Psoas muscle (tissue), 8 donors: ENCODE measurements at regions of chr1 and their contacts with region 1.

Region 1: DNA sequence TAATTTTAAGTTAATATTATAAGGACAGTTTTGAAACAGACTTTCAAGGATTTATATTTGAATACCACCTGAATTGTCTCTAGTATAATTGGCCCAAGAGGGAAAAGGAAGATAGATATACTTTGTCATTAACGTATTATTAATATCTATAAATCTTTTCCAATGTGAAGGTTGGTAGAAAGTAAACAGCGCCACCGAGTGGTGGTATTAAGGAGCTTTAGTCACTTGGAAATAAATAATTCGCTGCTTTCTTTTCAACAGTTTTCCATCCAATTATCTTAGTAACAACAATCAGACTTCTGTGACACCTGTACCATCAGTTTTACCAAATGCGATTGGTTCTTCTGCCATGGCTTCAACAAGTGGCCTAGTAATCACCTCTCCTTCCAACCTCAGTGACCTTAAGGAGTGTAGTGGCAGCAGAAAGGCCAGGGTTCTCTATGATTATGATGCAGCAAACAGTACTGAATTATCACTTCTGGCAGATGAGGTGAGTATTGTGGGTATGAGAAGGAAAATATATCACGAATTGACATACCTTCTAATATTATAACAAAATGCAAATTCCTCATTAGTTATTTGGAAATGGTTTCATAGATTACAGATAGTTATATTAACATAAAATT is 37.7 kb downstream of the SH3GLB1 start:
- DNase-seq: no peak
- ATAC-seq: peak in 2 of 4 donors; percentile 55 to 74
- H3K4me3 ChIP-seq: no peak overlapping the region
- H3K27ac ChIP-seq: no peak overlapping the region
- H3K4me1 ChIP-seq: peaks cover 12% of the 10 kb centered on the region
- H3K27me3 ChIP-seq: no peaks in the 10 kb centered on the region
- CTCF ChIP-seq: peak; percentile 64

Region 2: GRCh38 chr1:86470859-86471258 is 271.2 kb before region 1 on chr1:
- intact Hi-C with region 1: loop called in 1 of 2 experiments (anchors 10 kb)
- DNase-seq: no peak
- ATAC-seq: no peak
- H3K4me3 ChIP-seq: no peak overlapping the region
- H3K27ac ChIP-seq: no peak overlapping the region
- H3K4me1 ChIP-seq: no peaks in the 10 kb centered on the region
- H3K27me3 ChIP-seq: no peaks in the 10 kb centered on the region
- CTCF ChIP-seq: no peak

Region 3: GRCh38 chr1:86704458-86704971 is 37.5 kb before region 1 on chr1 and contains the start of gene SH3GLB1:
- intact Hi-C with region 1: loop called in 1 of 2 experiments (anchors 5 kb)
- DNase-seq: peak; percentile 91 to 95
- ATAC-seq: peak; percentile 86 to 89 (median 88)
- H3K4me3 ChIP-seq: peak within 1 kb of the TSS; percentile 93
- H3K27ac ChIP-seq: peak within 1 kb of the TSS; percentile 99
- H3K4me1 ChIP-seq: peaks cover 27% of the 10 kb centered on the region
- H3K27me3 ChIP-seq: no peaks in the 10 kb centered on the region
- CTCF ChIP-seq: peak; percentile 90
- total RNA-seq, gene SH3GLB1: 158 to 315 (median 198) TPM

Region 4: DNA sequence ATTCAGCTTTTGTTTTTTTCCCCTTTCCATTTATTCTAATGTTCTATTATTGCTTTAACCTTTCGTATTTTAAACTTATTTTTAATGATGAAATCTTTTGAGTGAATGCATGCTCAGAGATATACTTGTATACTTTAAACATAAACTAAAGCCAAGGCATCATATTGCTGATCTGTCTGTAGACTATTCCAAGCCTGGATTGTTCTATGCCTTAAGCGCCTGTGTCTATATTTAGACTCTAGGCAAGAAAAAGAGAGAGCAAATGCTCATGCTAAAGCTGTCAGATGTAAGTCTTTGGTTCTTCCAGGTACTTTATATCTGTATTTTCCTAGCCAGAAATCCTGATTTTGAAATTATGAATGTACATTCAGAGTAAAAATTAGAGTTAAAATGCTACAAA is 23.3 kb before region 1 on chr1:
- intact Hi-C with region 1: loop called in 1 of 2 experiments (anchors 2 kb)
- DNase-seq: no peak
- ATAC-seq: peak; percentile 38 to 70 (median 62)
- H3K4me3 ChIP-seq: peak overlapping the region; percentile 41
- H3K27ac ChIP-seq: peak overlapping the region; percentile 99
- H3K4me1 ChIP-seq: peaks cover 83% of the 10 kb centered on the region
- H3K27me3 ChIP-seq: no peaks in the 10 kb centered on the region
- CTCF ChIP-seq: no peak

Region 5: DNA sequence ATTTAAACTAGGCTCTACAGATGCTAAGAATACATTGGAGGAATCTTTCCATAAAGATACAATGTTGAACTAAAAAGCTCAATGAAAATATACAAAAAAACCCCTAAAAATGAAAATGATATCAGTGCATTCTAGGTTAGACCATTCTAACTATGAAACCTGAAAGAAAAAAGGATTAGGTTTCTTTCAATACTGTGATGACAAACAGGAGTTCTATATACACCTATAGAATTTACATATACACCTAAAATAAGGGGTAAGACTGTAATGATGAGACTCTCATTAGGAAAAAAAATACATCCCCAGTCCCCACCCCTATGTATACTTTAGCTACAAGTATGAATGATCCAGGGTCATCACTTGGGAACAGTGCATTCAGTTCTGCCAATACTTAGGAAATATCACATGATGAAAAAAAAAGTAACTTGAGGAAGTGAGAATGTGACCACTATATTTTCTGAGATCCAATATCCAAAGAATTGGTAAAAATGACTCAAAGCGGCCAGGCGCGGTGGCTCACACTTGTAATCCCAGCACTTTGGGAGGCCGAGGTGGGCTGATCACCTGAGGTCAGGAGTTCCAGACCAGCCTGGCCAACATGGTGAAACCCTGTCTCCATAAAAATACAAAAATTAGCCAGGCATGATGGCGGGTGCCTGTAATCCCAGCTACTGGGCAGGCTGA is 145.6 kb after region 1 on chr1:
- intact Hi-C with region 1: no loop called
- DNase-seq: no peak
- ATAC-seq: no peak
- H3K4me3 ChIP-seq: no peak overlapping the region
- H3K27ac ChIP-seq: no peak overlapping the region
- H3K4me1 ChIP-seq: no peaks in the 10 kb centered on the region
- H3K27me3 ChIP-seq: no peaks in the 10 kb centered on the region
- CTCF ChIP-seq: no peak